GM13976 (cell line): ENCODE measurements at regions of chr15 and their contacts with region 1.

Region 1: GRCh38 chr15:40852291-40852928 is 8.6 kb downstream of the SPINT1 start:
- DNase-seq: no peak
- CTCF ChIP-seq: no peak

Region 2: DNA sequence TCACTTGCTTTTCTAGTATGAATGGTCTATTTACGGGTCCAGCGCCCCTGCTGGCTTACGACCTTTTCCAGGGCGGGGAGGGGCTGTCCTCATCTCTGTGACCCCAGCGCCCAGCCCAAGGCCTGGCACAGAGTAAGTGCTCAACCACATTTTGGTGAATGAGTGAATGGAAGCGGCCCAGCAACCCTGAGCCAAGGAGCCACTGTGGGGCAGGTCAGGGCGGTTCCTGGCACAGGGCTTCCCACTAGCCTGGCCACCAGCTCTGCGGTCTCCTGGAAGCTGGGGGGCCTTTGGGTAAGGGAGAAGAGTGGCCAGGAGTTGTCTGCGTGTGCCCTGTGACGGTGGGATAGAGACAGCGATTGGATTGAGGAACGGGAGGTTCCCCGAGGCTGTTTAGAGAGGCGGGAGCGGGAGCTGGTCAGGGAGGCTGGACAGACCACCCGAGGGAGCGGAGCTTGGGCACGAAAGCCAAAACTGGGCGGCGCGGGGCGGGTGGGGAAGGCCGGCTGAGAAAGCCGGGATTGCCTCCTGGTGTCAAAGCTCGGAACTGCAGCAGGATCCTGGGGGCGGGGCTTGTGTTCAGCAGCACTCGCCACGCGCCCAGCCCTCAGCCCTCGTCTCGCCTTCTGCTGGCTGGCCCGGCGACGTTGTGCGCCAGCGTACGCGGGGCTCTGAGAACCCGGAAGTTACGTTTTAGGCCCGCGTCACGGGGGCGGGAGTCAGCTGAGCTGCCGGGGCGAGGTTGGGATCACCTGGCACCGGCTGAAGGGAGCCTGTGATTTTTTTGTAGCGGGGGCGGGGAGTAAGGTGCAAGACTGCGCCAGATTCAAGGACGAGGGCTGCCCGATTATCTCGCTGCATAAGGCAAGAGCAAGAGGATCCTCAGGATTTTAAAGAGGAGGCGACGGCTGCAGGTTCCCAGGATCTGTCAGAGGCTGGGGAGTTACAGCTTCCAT is 41.6 kb after region 1 on chr15 and contains the start of gene VPS18:
- in situ Hi-C with region 1: loop called (anchors 5 kb)
- DNase-seq: peak; percentile 96
- CTCF ChIP-seq: peak; percentile 96